HepG2 (cell line): ENCODE measurements at regions of chr22 and their contacts with region 1.

Region 1: DNA sequence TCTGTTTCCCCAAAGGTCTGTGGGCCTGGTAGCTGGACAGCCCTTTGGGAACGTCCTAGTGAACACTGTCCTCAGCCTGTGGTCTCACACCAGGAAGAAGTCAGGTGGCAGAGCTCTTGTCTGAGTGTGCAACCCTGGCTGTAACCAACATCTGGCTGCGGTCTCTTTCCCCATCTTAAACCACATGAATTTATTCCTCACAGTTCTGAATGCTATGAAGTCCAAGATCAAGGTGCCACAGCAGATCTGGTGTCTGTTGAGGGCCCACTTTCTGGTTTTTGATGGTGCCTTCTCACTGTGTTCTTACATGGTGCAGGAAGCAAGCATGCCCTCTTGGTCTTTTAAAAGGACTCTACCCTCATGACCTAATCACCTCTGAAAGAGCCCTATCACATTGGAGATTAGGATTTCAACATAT is 2.7 kb downstream of the UPB1 start:
- DNase-seq: no peak
- ATAC-seq: no peak
- H3K4me3 ChIP-seq: no peak overlapping the region
- H3K27ac ChIP-seq: no peak overlapping the region
- H3K4me1 ChIP-seq: peaks cover 100% of the 10 kb centered on the region
- H3K27me3 ChIP-seq: no peaks in the 10 kb centered on the region
- CTCF ChIP-seq: no peak
- EP300 ChIP-seq: no peak
- POLR2A ChIP-seq: no peak
- RAD21 ChIP-seq: no peak

Region 2: GRCh38 chr22:24466716-24467328 is 31.0 kb before region 1 on chr22:
- CTCF ChIA-PET with region 1: no interaction called
- POLR2A ChIA-PET with region 1: interaction called, 6 read pairs
- in situ Hi-C with region 1: no loop called
- intact Hi-C with region 1: loop called (anchors 1 kb)
- DNase-seq: no peak
- ATAC-seq: no peak
- H3K4me3 ChIP-seq: no peak overlapping the region
- H3K27ac ChIP-seq: no peak overlapping the region
- H3K4me1 ChIP-seq: peaks cover 20% of the 10 kb centered on the region
- H3K27me3 ChIP-seq: no peaks in the 10 kb centered on the region
- CTCF ChIP-seq: no peak
- EP300 ChIP-seq: no peak
- POLR2A ChIP-seq: no peak
- RAD21 ChIP-seq: no peak

Region 3: DNA sequence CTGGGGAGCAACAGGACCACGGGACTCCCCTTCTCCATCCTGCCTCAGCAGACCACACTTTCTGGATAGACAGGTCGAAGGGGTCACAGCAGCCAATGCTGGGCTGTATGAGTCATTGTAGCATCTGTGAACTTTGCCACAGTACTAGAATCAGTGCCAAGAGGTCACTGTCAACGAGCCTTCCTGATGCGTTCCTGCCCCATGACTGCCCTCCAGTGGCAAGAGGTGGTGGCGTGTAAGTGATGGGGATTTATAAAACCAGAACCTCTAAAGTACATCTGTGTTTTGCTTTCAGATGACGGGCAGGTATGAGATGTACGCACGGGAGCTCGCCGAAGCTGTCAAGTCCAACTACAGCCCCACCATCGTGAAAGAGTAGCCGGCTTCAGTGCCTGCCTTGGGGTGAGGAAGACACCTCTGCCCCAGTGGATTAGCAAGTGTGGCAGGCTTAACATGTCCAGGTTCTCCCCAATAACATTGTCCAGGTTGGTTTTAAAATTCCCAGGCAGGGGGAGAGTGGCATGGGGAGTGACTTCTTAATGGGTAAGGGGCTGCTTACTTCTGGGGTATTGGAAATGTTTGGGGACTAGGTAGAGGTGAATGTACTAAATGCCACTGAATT is 27.7 kb after region 1 on chr22:
- CTCF ChIA-PET with region 1: no interaction called
- POLR2A ChIA-PET with region 1: no interaction called
- in situ Hi-C with region 1: no loop called
- intact Hi-C with region 1: no loop called
- DNase-seq: peak; percentile 92
- ATAC-seq: peak; percentile 88
- H3K4me3 ChIP-seq: no peak overlapping the region
- H3K27ac ChIP-seq: no peak overlapping the region
- H3K4me1 ChIP-seq: peaks cover 54% of the 10 kb centered on the region
- H3K27me3 ChIP-seq: no peaks in the 10 kb centered on the region
- CTCF ChIP-seq: peak; percentile 99
- EP300 ChIP-seq: peak in 1 of 2 experiments; percentile 64; a peak in 1 of 4 replicates
- POLR2A ChIP-seq: no peak
- RAD21 ChIP-seq: peak; percentile 96